ENCODE measurements at regions of chr5 and their contacts with region 1.

Region 1: GRCh38 chr5:59810041-59810440 is 83.5 kb downstream of the PDE4D start:
- DNase-seq: no peak
- ATAC-seq: peak; percentile 83
- H3K4me3 ChIP-seq: no peak overlapping the region
- H3K27ac ChIP-seq: no peak overlapping the region
- H3K4me1 ChIP-seq: no peaks in the 10 kb centered on the region
- H3K27me3 ChIP-seq: no peaks in the 10 kb centered on the region; a peak in 1 of 4 replicates
- CTCF ChIP-seq: peak; percentile 86 to 89 (median 86)
- EP300 ChIP-seq: no peak
- POLR2A ChIP-seq: no peak
- RAD21 ChIP-seq: peak; percentile 76

Region 2: DNA sequence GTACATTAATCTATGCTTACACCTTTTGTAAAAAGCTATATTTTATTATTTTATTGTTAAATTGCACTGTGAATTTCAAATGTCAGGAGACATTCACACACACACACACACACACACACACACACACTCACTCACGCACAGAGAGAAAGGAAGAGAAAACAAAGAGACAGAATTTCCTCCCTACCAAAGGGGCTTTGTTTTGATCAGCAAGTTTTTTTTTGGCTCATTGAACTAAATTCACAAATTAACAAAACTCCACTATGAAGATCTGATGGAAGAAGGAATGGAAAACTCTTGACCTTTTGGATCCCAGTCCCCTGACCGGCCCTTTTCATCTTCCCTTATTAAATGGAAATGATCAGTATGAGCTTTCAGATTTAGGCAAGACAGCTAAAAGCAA is 77.7 kb before region 1 on chr5:
- CTCF ChIA-PET with region 1: no interaction called
- POLR2A ChIA-PET with region 1: no interaction called
- RAD21 ChIA-PET with region 1: no interaction called
- SMC1A ChIA-PET with region 1: no interaction called
- in situ Hi-C with region 1: no loop called
- intact Hi-C with region 1: no loop called
- DNase-seq: no peak
- ATAC-seq: no peak
- H3K4me3 ChIP-seq: no peak overlapping the region
- H3K27ac ChIP-seq: no peak overlapping the region
- H3K4me1 ChIP-seq: no peaks in the 10 kb centered on the region
- H3K27me3 ChIP-seq: no peaks in the 10 kb centered on the region
- CTCF ChIP-seq: no peak
- EP300 ChIP-seq: no peak
- POLR2A ChIP-seq: no peak
- RAD21 ChIP-seq: no peak

Region 3: GRCh38 chr5:59799668-59800346 is 10.2 kb before region 1 on chr5:
- CTCF ChIA-PET with region 1: interaction called, 37 read pairs
- POLR2A ChIA-PET with region 1: no interaction called
- RAD21 ChIA-PET with region 1: interaction called, 9 read pairs
- SMC1A ChIA-PET with region 1: interaction called, 4 read pairs
- in situ Hi-C with region 1: no loop called
- intact Hi-C with region 1: no loop called
- DNase-seq: peak; percentile 24
- ATAC-seq: peak; percentile 79
- H3K4me3 ChIP-seq: no peak overlapping the region; the same call in 1 of the 2 replicates
- H3K27ac ChIP-seq: no peak overlapping the region
- H3K4me1 ChIP-seq: peaks cover 11% of the 10 kb centered on the region; the same call in 1 of the 2 replicates
- H3K27me3 ChIP-seq: no peaks in the 10 kb centered on the region
- CTCF ChIP-seq: peak; percentile 41 to 71 (median 58); a peak in 5 of 6 replicates
- EP300 ChIP-seq: no peak
- POLR2A ChIP-seq: no peak
- RAD21 ChIP-seq: peak; percentile 82

Region 4: GRCh38 chr5:59923465-59923864 is 113.4 kb after region 1 on chr5:
- CTCF ChIA-PET with region 1: no interaction called
- POLR2A ChIA-PET with region 1: no interaction called
- RAD21 ChIA-PET with region 1: interaction called, 3 read pairs
- SMC1A ChIA-PET with region 1: no interaction called
- in situ Hi-C with region 1: no loop called
- intact Hi-C with region 1: loop called (anchors 5 kb)
- DNase-seq: no peak
- ATAC-seq: no peak
- H3K4me3 ChIP-seq: no peak overlapping the region
- H3K27ac ChIP-seq: no peak overlapping the region
- H3K4me1 ChIP-seq: no peaks in the 10 kb centered on the region
- H3K27me3 ChIP-seq: no peaks in the 10 kb centered on the region
- CTCF ChIP-seq: no peak
- EP300 ChIP-seq: no peak
- POLR2A ChIP-seq: no peak
- RAD21 ChIP-seq: 0 out of 2 replicates have a peak, but pooled peaks have one; percentile 3

Region 5: DNA sequence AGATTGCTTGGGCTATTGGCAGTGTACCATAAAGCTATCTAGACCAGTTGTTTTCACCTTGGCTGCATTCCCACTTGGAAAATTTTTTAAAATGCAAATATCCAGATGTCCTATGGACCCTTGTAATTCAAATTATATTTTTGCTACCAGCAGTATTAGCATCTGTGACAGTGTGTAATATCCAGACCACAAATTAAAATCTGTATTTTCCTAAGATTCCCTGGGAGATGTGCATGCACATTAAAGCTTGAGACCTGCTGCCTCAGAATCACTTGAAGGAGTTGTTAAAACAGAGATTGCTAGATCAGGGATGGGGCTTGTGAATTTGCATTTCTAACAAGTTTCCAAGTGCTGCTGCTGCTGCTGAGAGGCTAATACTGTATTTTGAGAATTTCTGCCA is 464.7 kb after region 1 on chr5:
- CTCF ChIA-PET with region 1: interaction called, 4 read pairs
- POLR2A ChIA-PET with region 1: no interaction called
- RAD21 ChIA-PET with region 1: no interaction called
- SMC1A ChIA-PET with region 1: interaction called, 3 read pairs
- in situ Hi-C with region 1: loop called (anchors 5 kb)
- intact Hi-C with region 1: no loop called
- DNase-seq: no peak
- ATAC-seq: no peak
- H3K4me3 ChIP-seq: no peak overlapping the region
- H3K27ac ChIP-seq: no peak overlapping the region
- H3K4me1 ChIP-seq: no peaks in the 10 kb centered on the region
- H3K27me3 ChIP-seq: no peaks in the 10 kb centered on the region
- CTCF ChIP-seq: no peak
- EP300 ChIP-seq: no peak
- POLR2A ChIP-seq: no peak
- RAD21 ChIP-seq: no peak

Region 6: GRCh38 chr5:60382716-60383115 is 572.7 kb after region 1 on chr5:
- CTCF ChIA-PET with region 1: interaction called, 14 read pairs
- POLR2A ChIA-PET with region 1: no interaction called
- RAD21 ChIA-PET with region 1: interaction called, 4 read pairs
- SMC1A ChIA-PET with region 1: interaction called, 7 read pairs
- in situ Hi-C with region 1: loop called (anchors 10 kb)
- intact Hi-C with region 1: loop called (anchors 1 kb)
- DNase-seq: peak; percentile 40
- ATAC-seq: peak; percentile 57
- H3K4me3 ChIP-seq: no peak overlapping the region
- H3K27ac ChIP-seq: no peak overlapping the region
- H3K4me1 ChIP-seq: peaks cover 7% of the 10 kb centered on the region
- H3K27me3 ChIP-seq: no peaks in the 10 kb centered on the region
- CTCF ChIP-seq: peak; percentile 38 to 56 (median 46); a peak in 5 of 6 replicates
- EP300 ChIP-seq: no peak
- POLR2A ChIP-seq: no peak
- RAD21 ChIP-seq: peak; percentile 83

Region 7: DNA sequence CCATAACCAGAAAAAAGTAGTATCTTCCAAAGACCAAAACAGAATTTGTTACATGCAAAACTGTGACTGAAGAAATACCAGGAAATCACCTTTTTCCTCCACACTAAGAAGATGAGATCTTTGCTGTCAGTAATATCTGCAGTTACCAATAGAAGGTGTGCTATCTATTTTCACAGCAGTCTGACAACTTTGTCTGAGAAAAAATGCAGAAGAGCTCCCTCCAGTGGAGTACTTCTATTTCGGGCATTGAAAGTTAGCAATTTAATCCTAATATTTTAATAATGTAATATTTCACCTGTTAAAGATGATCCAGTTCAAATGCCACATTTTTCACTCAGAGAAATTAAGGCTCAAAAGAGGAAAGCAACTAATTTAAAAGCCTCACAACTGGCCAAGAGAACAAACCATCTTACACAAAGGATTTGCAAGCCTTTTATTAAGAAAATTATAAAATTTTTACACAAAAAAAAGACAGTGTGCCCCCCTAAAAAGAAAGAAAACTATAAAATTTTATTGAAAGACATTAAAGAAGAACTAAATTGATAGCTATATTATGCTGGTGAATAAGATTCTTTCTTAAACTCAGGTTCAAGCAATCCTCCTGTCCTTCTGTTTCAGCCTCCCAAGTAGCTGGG is 839.4 kb after region 1 on chr5:
- CTCF ChIA-PET with region 1: interaction called, 18 read pairs
- POLR2A ChIA-PET with region 1: no interaction called
- RAD21 ChIA-PET with region 1: interaction called, 5 read pairs
- SMC1A ChIA-PET with region 1: interaction called, 4 read pairs
- in situ Hi-C with region 1: no loop called
- intact Hi-C with region 1: loop called (anchors 5 kb)
- DNase-seq: peak; percentile 15
- ATAC-seq: peak; percentile 86
- H3K4me3 ChIP-seq: no peak overlapping the region
- H3K27ac ChIP-seq: no peak overlapping the region
- H3K4me1 ChIP-seq: no peaks in the 10 kb centered on the region
- H3K27me3 ChIP-seq: no peaks in the 10 kb centered on the region
- CTCF ChIP-seq: peak; percentile 49 to 70 (median 59); a peak in 5 of 6 replicates
- EP300 ChIP-seq: no peak
- POLR2A ChIP-seq: no peak
- RAD21 ChIP-seq: peak; percentile 81